K562 (cell line): ENCODE measurements at regions of chr9 and their contacts with region 1.

Region 1: GRCh38 chr9:134217832-134218629 is 53.7 kb upstream of the RNU6ATAC start:
- DNase-seq: peak; percentile 42 to 56 (median 46)
- ATAC-seq: peak; percentile 82
- H3K4me3 ChIP-seq: no peak overlapping the region
- H3K27ac ChIP-seq: no peak overlapping the region
- H3K4me1 ChIP-seq: peaks cover 10 to 30% of the 10 kb centered on the region in 2 experiments; a peak in 4 of 5 replicates
- H3K27me3 ChIP-seq: peaks cover 22 to 61% of the 10 kb centered on the region in 2 experiments
- CTCF ChIP-seq: peak; percentile 57 to 64 (median 63)
- EP300 ChIP-seq: no peak
- POLR2A ChIP-seq: no peak
- RAD21 ChIP-seq: peak; percentile 26 to 65; a peak in 3 of 4 replicates

Region 2: GRCh38 chr9:134171316-134172197 is 46.5 kb before region 1 on chr9:
- CTCF ChIA-PET with region 1: interaction called, 13 read pairs
- POLR2A ChIA-PET with region 1: interaction called, 3 read pairs
- in situ Hi-C with region 1: no loop called
- intact Hi-C with region 1: loop called (anchors 2 kb)
- DNase-seq: no peak
- ATAC-seq: no peak
- H3K4me3 ChIP-seq: no peak overlapping the region
- H3K27ac ChIP-seq: no peak overlapping the region
- H3K4me1 ChIP-seq: peaks cover 2 to 44% of the 10 kb centered on the region in 2 experiments; a peak in 3 of 5 replicates
- H3K27me3 ChIP-seq: peaks cover 9 to 39% of the 10 kb centered on the region in 2 experiments; a peak in 4 of 5 replicates
- CTCF ChIP-seq: no peak
- EP300 ChIP-seq: no peak
- POLR2A ChIP-seq: no peak
- RAD21 ChIP-seq: no peak

Region 3: GRCh38 chr9:134283111-134283515 is 65.1 kb after region 1 on chr9:
- CTCF ChIA-PET with region 1: no interaction called
- POLR2A ChIA-PET with region 1: no interaction called
- in situ Hi-C with region 1: no loop called
- intact Hi-C with region 1: no loop called
- DNase-seq: no peak
- ATAC-seq: no peak
- H3K4me3 ChIP-seq: no peak overlapping the region
- H3K27ac ChIP-seq: no peak overlapping the region
- H3K4me1 ChIP-seq: peaks cover 0 to 15% of the 10 kb centered on the region in 2 experiments; a peak in 1 of 5 replicates
- H3K27me3 ChIP-seq: peaks cover 27 to 77% of the 10 kb centered on the region in 2 experiments; a peak in 4 of 5 replicates
- CTCF ChIP-seq: no peak
- EP300 ChIP-seq: no peak
- POLR2A ChIP-seq: no peak
- RAD21 ChIP-seq: no peak